ENCODE measurements at regions of chr14 and their contacts with region 1.

Region 1: GRCh38 chr14:22556990-22557623 is 31.9 kb downstream of the DAD1 start:
- DNase-seq: peak; percentile 93
- ATAC-seq: peak; percentile 42
- H3K4me3 ChIP-seq: peak overlapping the region; percentile 7 to 71 (median 49)
- H3K4me3 Mint-ChIP-seq: peak overlapping the region; percentile 73
- H3K27ac ChIP-seq: peak overlapping the region; percentile 99 to 100
- H3K27ac Mint-ChIP-seq: peak overlapping the region; percentile 97
- H3K4me1 ChIP-seq: peaks cover 61 to 85% of the 10 kb centered on the region in 2 donors
- H3K4me1 Mint-ChIP-seq: peaks cover 84% of the 10 kb centered on the region
- H3K27me3 ChIP-seq: no peaks in the 10 kb centered on the region
- H3K27me3 Mint-ChIP-seq: peaks cover 3% of the 10 kb centered on the region
- CTCF ChIP-seq: peak; percentile 100

Region 2: DNA sequence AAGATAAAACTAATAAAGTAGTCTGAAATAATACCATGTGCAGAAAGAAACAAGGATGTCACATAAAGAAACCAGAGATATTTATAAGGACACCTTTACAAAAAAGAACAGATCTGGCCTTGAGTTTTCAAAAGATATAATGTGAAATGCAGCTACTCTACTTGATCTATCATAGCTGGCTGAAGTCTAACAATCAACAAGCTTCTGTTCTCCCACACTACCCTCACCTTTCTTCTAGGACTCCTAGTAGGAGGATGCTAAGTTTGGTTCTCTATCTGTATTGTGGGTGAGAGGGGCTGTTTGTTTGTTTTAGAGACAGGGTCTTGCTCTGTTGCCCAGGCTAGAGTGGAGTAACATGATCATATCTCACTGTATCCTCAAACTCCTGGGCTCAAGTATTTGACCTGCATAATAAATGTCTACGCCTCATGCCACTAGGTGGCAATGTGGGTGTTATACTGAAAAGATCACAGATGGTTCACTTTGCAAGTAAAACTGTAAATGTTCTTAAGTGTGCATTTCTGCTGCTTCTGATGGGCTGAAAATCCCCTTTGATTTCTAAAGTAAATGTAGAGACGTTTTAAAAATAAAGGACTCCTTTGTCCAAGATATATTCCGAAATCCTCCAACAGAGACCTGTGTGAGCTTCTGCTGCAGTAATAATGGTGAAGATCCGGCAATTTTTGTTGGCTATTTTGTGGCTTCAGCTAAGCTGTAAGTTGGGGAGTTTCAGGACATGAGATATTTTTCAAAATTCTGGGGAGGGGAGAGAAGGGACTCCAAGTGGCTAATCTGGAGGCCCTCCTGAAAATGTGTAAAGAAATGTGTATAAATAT is 237.4 kb before region 1 on chr14:
- CTCF ChIA-PET with region 1: interaction called, 17 read pairs
- POLR2A ChIA-PET with region 1: no interaction called
- intact Hi-C with region 1: loop called (anchors 1 kb)
- DNase-seq: peak; percentile 69
- ATAC-seq: peak; percentile 70
- H3K4me3 ChIP-seq: no peak overlapping the region
- H3K4me3 Mint-ChIP-seq: no peak overlapping the region
- H3K27ac ChIP-seq: no peak overlapping the region
- H3K27ac Mint-ChIP-seq: no peak overlapping the region
- H3K4me1 ChIP-seq: no peaks in the 10 kb centered on the region
- H3K4me1 Mint-ChIP-seq: peaks cover 3% of the 10 kb centered on the region
- H3K27me3 ChIP-seq: no peaks in the 10 kb centered on the region
- H3K27me3 Mint-ChIP-seq: peaks cover 5% of the 10 kb centered on the region
- CTCF ChIP-seq: peak; percentile 87

Region 3: GRCh38 chr14:22483863-22484593 is 73.1 kb before region 1 on chr14:
- CTCF ChIA-PET with region 1: interaction called, 157 read pairs
- POLR2A ChIA-PET with region 1: interaction called, 10 read pairs
- intact Hi-C with region 1: no loop called
- DNase-seq: no peak
- ATAC-seq: peak; percentile 29
- H3K4me3 ChIP-seq: peak overlapping the region in 1 of 5 experiments; percentile 15
- H3K4me3 Mint-ChIP-seq: peak overlapping the region; percentile 81
- H3K27ac ChIP-seq: peak overlapping the region; percentile 8 to 26
- H3K27ac Mint-ChIP-seq: peak overlapping the region; percentile 91
- H3K4me1 ChIP-seq: peaks cover 59 to 79% of the 10 kb centered on the region in 2 donors
- H3K4me1 Mint-ChIP-seq: peaks cover 91% of the 10 kb centered on the region
- H3K27me3 ChIP-seq: no peaks in the 10 kb centered on the region
- H3K27me3 Mint-ChIP-seq: no peaks in the 10 kb centered on the region
- CTCF ChIP-seq: no peak

Region 4: GRCh38 chr14:22531451-22532344 is 25.4 kb before region 1 on chr14:
- CTCF ChIA-PET with region 1: interaction called, 72 read pairs
- POLR2A ChIA-PET with region 1: interaction called, 16 read pairs
- intact Hi-C with region 1: loop called (anchors 1 kb)
- DNase-seq: peak; percentile 79
- ATAC-seq: peak; percentile 79
- H3K4me3 ChIP-seq: peak overlapping the region; percentile 23 to 51 (median 32)
- H3K4me3 Mint-ChIP-seq: peak overlapping the region; percentile 79
- H3K27ac ChIP-seq: peak overlapping the region; percentile 89 to 90
- H3K27ac Mint-ChIP-seq: peak overlapping the region; percentile 93
- H3K4me1 ChIP-seq: peaks cover 49 to 63% of the 10 kb centered on the region in 2 donors
- H3K4me1 Mint-ChIP-seq: peaks cover 86% of the 10 kb centered on the region
- H3K27me3 ChIP-seq: no peaks in the 10 kb centered on the region
- H3K27me3 Mint-ChIP-seq: no peaks in the 10 kb centered on the region
- CTCF ChIP-seq: no peak

Region 5: DNA sequence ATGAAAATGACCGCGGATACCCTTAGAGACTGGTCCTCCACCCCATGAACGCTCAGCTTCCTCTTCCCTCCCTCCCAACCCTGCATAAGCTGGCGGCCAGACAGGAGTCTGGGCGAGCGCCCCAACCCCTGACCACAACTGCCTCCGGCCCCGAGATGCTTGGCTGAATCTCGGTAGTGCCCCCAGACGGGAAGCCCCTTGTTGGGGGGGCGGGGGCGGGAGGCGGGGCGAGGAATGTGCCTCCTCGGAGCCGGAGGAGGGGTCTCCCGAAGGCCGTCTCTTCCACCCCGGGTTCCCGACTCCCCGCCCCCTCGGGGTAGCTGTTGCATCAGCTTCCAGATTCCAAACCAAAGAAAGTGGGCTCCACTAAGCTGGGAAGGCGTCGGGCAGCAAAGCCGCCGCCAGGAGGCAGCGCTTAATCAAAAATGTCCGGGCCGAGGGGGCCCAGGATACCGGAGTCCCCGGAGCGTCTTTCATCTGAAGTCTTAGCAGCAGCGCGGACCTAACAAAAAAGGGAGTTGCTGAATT is 265.5 kb after region 1 on chr14:
- CTCF ChIA-PET with region 1: interaction called, 10 read pairs
- POLR2A ChIA-PET with region 1: interaction called, 3 read pairs
- intact Hi-C with region 1: loop called (anchors 1 kb)
- DNase-seq: peak; percentile 87
- ATAC-seq: peak; percentile 67
- H3K4me3 ChIP-seq: peak overlapping the region; percentile 49 to 85 (median 56)
- H3K4me3 Mint-ChIP-seq: peak overlapping the region; percentile 88
- H3K27ac ChIP-seq: peak overlapping the region; percentile 65 to 71
- H3K27ac Mint-ChIP-seq: peak overlapping the region; percentile 94
- H3K4me1 ChIP-seq: peaks cover 31 to 47% of the 10 kb centered on the region in 2 donors
- H3K4me1 Mint-ChIP-seq: peaks cover 61% of the 10 kb centered on the region
- H3K27me3 ChIP-seq: no peaks in the 10 kb centered on the region
- H3K27me3 Mint-ChIP-seq: no peaks in the 10 kb centered on the region
- CTCF ChIP-seq: peak; percentile 82

Region 6: DNA sequence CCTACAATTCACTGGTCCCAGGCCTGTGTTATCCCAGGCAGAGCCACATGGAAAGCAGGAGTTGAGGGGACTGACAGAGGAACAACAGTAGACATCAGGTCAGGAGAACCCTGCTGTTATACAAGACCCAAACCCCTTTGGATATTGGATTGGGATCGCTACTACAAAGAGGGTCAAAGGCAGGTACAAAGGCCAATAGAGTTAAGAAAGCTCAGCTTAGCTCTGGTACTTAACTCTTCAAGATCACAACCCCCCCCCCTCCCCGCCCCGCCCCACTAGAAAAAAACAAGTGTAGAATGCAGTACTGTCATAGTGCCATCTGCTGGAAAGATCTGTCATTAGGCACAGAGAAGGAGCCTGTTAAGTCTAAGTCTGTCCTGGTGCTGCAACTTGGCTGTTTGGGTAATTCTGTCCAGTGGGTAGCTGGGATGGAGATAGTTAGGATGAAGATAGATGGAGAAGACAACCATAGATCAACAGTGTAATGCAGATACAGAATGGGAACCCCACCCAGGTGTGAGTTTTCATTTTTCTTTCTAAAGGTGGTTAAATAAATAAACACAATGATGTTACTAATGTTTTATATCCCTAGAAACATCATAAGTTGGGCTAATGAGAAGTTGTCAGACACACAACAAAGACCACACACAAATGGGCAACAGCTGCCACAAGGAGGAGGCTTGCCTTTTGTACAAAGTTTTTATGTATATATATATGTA is 343.1 kb after region 1 on chr14:
- CTCF ChIA-PET with region 1: interaction called, 5 read pairs
- POLR2A ChIA-PET with region 1: no interaction called
- intact Hi-C with region 1: loop called (anchors 1 kb)
- DNase-seq: peak; percentile 81
- ATAC-seq: peak; percentile 76
- H3K4me3 ChIP-seq: no peak overlapping the region
- H3K4me3 Mint-ChIP-seq: no peak overlapping the region
- H3K27ac ChIP-seq: peak overlapping the region in 1 of 2 donors; percentile 38
- H3K27ac Mint-ChIP-seq: peak overlapping the region; percentile 10
- H3K4me1 ChIP-seq: peaks cover 3 to 6% of the 10 kb centered on the region in 2 donors
- H3K4me1 Mint-ChIP-seq: peaks cover 7% of the 10 kb centered on the region
- H3K27me3 ChIP-seq: no peaks in the 10 kb centered on the region
- H3K27me3 Mint-ChIP-seq: no peaks in the 10 kb centered on the region
- CTCF ChIP-seq: peak; percentile 71

Measured in B cell (primary cell).